HEK293 (cell line): ENCODE measurements at regions of chr19 and their contacts with region 1.

Region 1: DNA sequence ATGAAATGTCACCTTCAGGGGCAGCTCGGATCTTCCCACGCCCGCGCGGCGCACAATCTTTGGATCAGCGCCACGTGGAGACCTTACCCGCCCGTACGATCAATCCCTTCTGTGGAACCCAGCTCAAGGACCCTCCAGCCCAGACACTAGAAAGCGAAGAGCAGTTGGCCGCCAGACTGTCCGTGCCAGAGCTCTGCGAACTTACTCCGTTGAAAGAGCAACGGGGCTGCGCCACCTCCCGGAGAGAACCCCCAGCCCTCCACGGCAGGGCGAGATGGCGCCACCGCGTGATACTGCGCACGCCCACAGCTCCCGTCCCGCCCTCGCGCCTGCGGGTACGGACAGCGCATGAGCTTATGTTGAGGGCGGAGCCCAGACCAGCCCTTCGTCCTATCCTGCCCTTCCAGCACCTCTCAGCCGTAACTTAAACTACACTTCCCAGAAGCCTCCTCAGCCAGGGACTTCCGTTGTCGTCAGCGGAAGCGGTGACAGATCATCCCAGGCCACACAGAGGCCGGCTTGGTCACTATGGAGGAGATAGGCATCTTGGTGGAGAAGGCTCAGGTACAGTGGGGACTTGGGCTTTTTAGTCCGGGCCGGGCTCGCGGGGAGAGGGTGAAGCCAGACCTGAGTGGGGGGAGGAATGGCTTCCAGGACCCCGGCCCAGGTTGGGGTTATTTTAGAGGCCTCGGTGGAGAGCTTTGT is at the start of gene PSMC4:
- H3K4me3 ChIP-seq: peak within 1 kb of the TSS; percentile 66
- H3K27ac ChIP-seq: peak within 1 kb of the TSS; percentile 80
- H3K4me1 ChIP-seq: peaks cover 14% of the 10 kb centered on the region
- CTCF ChIP-seq: peak; percentile 100

Region 2: DNA sequence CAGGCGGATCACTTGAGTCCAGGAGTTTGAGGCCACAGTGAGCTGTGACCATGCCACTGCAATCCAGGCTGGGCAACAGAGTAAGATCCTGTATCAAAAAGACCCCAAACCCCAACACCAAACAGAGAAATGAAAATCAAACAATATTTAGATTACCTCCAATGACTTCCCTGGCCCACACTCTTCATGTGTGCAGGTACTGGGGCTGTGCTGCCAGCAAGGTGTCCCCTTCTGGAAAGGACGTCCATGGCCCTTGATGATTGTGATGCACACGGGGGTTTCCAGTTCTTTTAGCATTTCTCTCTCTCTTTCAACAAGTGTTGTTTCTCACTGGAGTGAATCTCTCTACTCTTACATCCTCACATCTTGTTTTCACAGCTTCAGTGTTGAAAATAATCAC is 290.2 kb before region 1 on chr19:
- CTCF ChIA-PET with region 1: no interaction called
- POLR2A ChIA-PET with region 1: no interaction called
- H3K4me3 ChIP-seq: no peak overlapping the region
- H3K27ac ChIP-seq: no peak overlapping the region
- H3K4me1 ChIP-seq: peaks cover 5% of the 10 kb centered on the region; the same call in 1 of the 2 replicates
- CTCF ChIP-seq: no peak

Region 3: GRCh38 chr19:39792999-39793546 is 177.8 kb before region 1 on chr19:
- CTCF ChIA-PET with region 1: interaction called, 16 read pairs
- POLR2A ChIA-PET with region 1: interaction called, 9 read pairs
- H3K4me3 ChIP-seq: peak overlapping the region; percentile 29
- H3K27ac ChIP-seq: no peak overlapping the region
- H3K4me1 ChIP-seq: no peaks in the 10 kb centered on the region
- CTCF ChIP-seq: peak; percentile 99

Region 4: GRCh38 chr19:39919961-39920360 is 50.9 kb before region 1 on chr19:
- CTCF ChIA-PET with region 1: interaction called, 12 read pairs
- POLR2A ChIA-PET with region 1: no interaction called
- H3K4me3 ChIP-seq: no peak overlapping the region
- H3K27ac ChIP-seq: no peak overlapping the region
- H3K4me1 ChIP-seq: no peaks in the 10 kb centered on the region
- CTCF ChIP-seq: no peak

Region 5: DNA sequence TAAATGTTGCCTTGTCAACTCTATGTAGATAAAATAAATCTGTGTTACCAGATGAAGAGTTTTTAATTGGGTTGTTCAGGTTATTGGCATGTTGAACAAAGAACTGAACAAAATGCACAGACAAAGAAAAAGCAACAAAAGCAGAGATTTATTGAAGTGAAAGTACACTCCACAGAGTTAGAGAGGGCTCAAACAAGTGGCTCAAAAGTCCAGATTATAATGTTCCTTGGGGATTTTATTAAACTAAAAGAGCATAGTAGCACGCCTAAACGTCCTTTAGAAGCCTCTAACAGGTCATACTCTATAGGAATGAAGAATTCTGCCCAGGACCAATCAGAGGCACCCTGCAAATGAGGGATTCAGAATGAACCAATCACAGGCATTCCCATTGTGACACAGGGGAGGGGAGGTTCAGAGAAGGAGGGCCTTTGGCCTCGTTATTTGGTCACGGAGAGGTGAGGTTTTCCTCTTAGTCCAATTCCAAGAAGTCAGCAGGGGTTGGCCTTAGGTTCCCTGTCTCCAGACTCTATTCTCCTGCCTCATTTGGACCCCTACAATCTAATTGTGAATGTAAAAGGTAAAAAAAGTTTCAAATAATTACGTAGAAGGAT is 13.0 kb after region 1 on chr19:
- CTCF ChIA-PET with region 1: interaction called, 9 read pairs
- POLR2A ChIA-PET with region 1: interaction called, 20 read pairs
- H3K4me3 ChIP-seq: no peak overlapping the region
- H3K27ac ChIP-seq: no peak overlapping the region
- H3K4me1 ChIP-seq: no peaks in the 10 kb centered on the region
- CTCF ChIP-seq: no peak

Region 6: GRCh38 chr19:40090241-40091204 is 119.7 kb after region 1 on chr19 and contains the start of gene ZNF780A:
- CTCF ChIA-PET with region 1: no interaction called
- POLR2A ChIA-PET with region 1: interaction called, 23 read pairs
- H3K4me3 ChIP-seq: peak within 1 kb of the TSS; percentile 51
- H3K27ac ChIP-seq: peak within 1 kb of the TSS; percentile 87
- H3K4me1 ChIP-seq: peaks cover 16% of the 10 kb centered on the region
- CTCF ChIP-seq: peak; percentile 38; the same call in 1 of the 2 replicates

Region 7: DNA sequence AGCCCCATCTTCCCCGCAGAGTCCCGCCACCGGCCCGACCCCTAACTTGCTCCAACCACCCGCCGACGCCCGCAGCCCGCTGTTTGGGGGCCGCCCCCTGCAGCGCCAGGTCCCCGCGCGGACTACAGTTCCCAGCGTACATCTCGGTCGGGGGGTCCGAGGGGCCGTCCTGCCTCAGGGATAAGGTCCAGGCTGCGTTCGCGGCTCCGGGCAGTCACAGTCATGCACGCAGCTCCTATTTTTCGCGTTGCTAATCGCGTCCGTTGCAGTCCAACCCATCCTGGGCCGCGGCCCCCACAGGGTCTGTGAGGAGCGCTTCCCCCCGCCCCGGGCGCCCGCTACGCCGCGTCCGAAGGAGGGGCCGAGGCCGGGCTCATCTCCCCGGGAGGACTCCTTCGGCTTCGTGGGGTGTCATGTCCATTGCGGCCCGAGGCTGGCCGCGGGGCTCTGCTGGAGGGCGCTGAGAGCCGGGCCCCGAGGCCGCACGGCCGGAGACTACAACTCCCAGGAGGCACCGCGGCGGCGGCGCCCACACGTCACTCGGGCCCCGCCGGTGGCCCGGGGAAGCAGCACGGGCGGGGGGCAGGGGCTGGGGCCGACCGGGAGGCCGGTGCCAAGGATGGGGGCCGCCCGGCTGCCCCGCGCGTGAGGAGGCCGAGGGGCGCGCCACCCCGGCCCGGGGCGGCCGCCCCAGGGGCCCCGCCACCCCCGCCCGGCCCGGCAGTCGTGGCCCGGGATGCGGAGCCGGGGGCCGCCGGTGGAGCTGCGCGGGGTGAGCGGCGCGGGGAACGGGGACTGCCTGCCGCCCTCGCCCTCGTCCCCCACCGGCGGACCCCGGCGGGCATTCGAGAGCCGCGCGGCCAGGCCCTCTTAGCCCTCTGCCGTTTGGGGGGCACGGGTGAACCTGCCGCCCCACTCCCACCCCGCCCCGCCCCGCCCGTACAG is 220.3 kb after region 1 on chr19 and contains the start of gene MAP3K10:
- CTCF ChIA-PET with region 1: no interaction called
- POLR2A ChIA-PET with region 1: interaction called, 10 read pairs
- H3K4me3 ChIP-seq: peak within 1 kb of the TSS; percentile 81
- H3K27ac ChIP-seq: peak within 1 kb of the TSS; percentile 99
- H3K4me1 ChIP-seq: peaks cover 19% of the 10 kb centered on the region
- CTCF ChIP-seq: peak; percentile 51; the same call in 1 of the 2 replicates